ENCODE measurements at regions of chr5 and their contacts with region 1.

Region 1: DNA sequence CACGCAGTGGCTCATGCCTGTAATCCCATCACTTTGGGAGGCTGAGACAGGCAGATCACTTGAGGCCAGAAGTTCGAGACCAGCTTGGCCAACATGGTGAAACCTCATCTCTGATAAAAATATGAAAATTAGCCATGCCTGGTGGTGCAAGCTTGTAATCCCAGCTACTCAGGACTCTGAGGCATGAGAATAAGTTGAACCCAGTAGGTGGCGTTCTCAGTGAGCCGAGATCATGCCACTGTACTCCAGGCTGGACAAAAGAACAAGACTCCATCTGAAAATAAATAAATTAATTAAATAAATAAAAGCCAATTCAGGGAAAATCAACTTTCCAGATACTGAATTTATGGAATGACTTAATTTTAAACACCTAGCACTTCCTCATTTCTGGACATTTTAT is 1722.1 kb downstream of the MAT2B start:
- DNase-seq: peak; percentile 14
- H3K4me3 Mint-ChIP-seq: no peak overlapping the region
- H3K27ac Mint-ChIP-seq: no peak overlapping the region
- H3K4me1 Mint-ChIP-seq: no peaks in the 10 kb centered on the region
- H3K27me3 Mint-ChIP-seq: no peaks in the 10 kb centered on the region
- CTCF ChIP-seq: no peak

Region 2: DNA sequence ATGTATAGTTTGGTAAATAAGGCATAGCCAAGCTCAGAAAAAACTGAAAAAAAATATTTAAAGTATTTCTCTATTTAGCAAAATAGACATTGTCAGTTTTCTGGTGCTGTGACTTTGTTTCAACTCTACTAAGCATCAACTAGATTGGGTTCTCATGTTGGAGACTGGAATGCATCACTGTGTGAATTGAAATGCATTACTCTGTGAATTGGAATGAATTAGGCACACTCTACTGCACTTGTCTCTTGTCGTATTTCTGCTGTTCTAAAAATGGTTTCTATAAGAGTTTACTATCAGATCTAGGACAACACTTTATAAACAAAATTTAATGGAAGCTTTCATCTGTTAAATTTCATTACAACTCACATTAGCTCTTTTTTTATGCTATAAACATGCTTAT is 50.1 kb after region 1 on chr5:
- CTCF ChIA-PET with region 1: no interaction called
- intact Hi-C with region 1: no loop called
- DNase-seq: no peak
- H3K4me3 Mint-ChIP-seq: no peak overlapping the region
- H3K27ac Mint-ChIP-seq: no peak overlapping the region
- H3K4me1 Mint-ChIP-seq: no peaks in the 10 kb centered on the region
- H3K27me3 Mint-ChIP-seq: no peaks in the 10 kb centered on the region
- CTCF ChIP-seq: no peak

Region 3: DNA sequence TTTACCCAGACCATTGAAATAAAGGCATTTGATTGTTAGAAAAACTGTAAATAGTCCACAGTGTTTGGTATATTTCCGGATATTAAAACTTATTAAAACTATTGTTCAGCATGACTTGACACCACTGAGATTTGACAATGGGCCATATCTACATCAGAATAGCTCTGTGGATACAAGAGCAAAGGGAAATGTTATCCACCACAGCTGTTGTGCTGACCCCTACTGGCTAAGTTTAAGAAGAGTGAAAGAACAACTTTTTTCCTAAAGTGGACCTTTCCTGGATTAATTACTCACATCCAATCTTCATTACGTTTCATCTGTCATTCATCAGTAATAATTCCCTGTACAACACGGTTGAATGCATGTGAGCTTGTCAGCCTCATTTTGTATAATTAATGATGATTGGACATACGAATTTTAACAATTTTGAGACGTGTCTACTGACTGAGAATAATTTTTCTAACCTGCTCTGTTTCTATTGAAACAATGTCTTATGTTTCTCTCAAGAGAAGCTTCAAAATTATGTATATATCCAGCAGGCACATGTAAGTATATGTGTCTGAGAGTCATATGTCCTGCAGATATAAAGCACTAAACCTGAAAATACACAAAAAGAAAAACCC is 230.5 kb after region 1 on chr5:
- CTCF ChIA-PET with region 1: interaction called, 5 read pairs
- intact Hi-C with region 1: loop called (anchors 2 kb)
- DNase-seq: peak; percentile 42
- H3K4me3 Mint-ChIP-seq: no peak overlapping the region
- H3K27ac Mint-ChIP-seq: no peak overlapping the region
- H3K4me1 Mint-ChIP-seq: peaks cover 8% of the 10 kb centered on the region
- H3K27me3 Mint-ChIP-seq: no peaks in the 10 kb centered on the region
- CTCF ChIP-seq: no peak

Region 4: GRCh38 chr5:165616490-165617430 is 389.2 kb after region 1 on chr5:
- CTCF ChIA-PET with region 1: no interaction called
- intact Hi-C with region 1: loop called (anchors 10 kb)
- DNase-seq: peak; percentile 19
- H3K4me3 Mint-ChIP-seq: no peak overlapping the region
- H3K27ac Mint-ChIP-seq: no peak overlapping the region
- H3K4me1 Mint-ChIP-seq: no peaks in the 10 kb centered on the region
- H3K27me3 Mint-ChIP-seq: no peaks in the 10 kb centered on the region
- CTCF ChIP-seq: no peak

Measured in Calu3 (cell line).